H1 (cell line): ENCODE measurements at regions of chr10 and their contacts with region 1.

Region 1: DNA sequence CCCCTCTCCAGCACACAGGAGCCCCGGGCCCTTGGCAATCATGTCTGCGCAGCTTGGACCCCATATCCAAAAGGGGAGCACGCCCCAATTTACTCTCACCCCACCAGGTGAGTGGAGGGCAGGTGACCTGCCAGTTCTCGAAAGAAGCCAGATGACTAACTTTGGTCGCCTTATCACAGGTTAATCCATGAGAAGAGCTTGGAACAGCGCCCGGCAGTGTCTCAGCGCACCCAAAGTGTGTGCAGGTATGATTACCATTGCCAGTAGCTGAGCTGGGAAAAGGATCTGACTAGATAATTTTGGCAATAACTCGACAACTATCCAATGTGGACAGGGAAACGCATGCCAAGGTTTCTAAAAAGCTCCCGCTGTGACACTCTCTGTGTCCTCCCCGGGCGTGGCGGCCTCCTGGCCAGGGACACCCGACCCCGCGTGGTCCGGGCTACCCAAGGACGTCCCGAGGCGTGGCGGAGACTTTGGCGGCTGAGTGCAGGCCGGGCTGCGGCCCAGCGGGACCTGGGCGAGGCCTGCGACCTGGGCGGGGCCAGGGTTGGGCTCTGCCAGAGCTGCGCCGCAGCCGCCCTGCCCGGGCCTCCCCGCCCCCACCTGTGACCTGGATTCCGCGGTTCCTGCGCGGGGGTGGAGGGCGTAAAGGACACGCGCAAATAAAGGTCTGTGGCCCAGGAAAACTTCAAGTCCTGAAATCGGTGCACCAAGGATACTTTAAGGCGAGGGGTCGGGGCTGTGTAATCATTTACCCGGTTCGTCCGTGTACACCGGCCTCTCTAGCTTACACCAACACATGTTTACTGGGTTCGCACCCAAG is 13.7 kb upstream of the WAPL start:
- DNase-seq: peak in 1 of 2 experiments; percentile 88
- H3K4me3 ChIP-seq: peak overlapping the region; percentile 78 to 86 (median 80)
- H3K27ac ChIP-seq: no peak overlapping the region
- H3K4me1 ChIP-seq: peaks cover 6 to 22% (median 15%) of the 10 kb centered on the region in 4 experiments
- H3K27me3 ChIP-seq: peaks cover 0 to 21% (median 10%) of the 10 kb centered on the region in 4 experiments; a peak in 5 of 7 replicates
- CTCF ChIP-seq: no peak
- EP300 ChIP-seq: no peak
- POLR2A ChIP-seq: no peak; a peak in 1 of 3 replicates
- RAD21 ChIP-seq: no peak

Region 2: DNA sequence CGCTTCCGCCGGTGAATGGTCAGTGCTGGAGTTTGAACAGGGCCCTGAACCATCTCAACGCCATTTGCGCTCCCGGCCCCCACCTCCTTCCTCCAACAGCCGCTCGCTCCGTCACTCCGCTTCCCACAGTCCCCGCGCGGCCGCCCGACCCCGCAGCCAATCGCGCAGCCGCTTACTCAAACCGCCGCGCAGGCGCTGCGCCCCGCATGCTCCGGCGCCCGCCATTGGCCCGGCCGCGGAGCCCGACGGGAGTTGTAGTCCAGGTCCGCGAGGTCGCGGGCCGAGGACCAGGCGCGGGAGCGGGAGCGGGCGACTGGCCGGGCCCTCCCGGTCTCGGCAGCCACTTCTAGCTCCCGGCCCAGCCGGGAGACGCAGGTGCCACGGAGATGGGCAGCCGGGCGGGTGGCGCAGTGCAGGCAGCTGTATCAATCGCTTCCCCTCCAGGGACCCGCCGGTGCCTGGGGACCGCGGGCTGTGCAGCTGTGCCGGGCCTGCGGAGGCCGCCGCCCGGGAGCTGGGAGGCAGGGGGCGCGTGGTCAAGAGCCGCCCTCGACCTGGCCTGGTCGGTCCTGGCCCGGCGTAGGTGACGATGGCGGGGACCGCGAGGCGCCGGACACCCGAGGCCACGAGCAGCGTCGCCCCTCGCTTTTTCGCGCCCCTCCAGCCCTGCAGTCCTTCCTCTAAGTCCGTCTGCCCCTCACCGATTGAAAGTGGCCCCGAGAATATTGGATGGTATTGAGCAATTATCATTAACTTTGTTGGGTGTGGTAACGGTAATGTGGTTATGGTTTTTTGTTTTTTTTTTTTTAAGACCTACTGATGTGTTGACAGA is 13.4 kb before region 1 on chr10 and contains the start of gene WAPL:
- CTCF ChIA-PET with region 1: interaction called, 25 read pairs
- POLR2A ChIA-PET with region 1: interaction called, 11 read pairs
- DNase-seq: peak; percentile 67 to 95
- H3K4me3 ChIP-seq: peak within 1 kb of the TSS; percentile 76 to 91 (median 82)
- H3K27ac ChIP-seq: peak within 1 kb of the TSS; percentile 71
- H3K4me1 ChIP-seq: peaks cover 0 to 5% (median 2%) of the 10 kb centered on the region in 4 experiments; a peak in 5 of 7 replicates
- H3K27me3 ChIP-seq: no peaks in the 10 kb centered on the region
- CTCF ChIP-seq: no peak
- EP300 ChIP-seq: no peak; a peak in 1 of 3 replicates
- POLR2A ChIP-seq: peak in 1 of 2 experiments; percentile 51; a peak in 1 of 3 replicates
- RAD21 ChIP-seq: no peak
- total RNA-seq, gene WAPL: 48.1 and 49.2 TPM in 2 replicates